HEK293T (cell line): ENCODE measurements at regions of chr5 and their contacts with region 1.

Region 1: GRCh38 chr5:36301858-36302603 is at the start of gene RANBP3L:
- DNase-seq: peak; percentile 44

Region 2: DNA sequence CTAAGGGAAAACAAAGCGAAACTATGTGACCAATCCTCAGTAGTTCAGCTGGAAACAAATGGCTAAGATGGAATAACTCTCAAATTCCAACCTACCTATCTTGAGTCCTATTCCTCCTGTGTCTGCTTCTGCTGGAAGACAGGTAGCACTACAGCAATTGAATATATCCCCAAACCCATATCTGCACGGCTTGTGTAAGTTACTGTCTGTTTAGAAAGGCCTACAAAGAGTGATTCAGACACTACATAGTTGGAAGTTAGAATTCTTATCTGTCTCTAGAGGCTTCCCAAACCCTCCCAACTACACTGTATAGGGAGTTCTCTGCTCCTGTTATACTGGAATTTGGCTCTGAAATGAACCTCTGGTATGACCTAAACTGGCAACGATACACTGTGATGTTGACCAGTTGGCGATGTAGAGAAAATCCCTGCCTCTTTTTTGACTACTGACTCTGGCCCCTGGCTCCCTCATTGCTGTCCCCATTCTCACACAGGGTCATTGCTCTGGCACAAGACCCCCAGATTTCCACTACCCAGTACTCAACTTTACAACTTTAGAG is 37.8 kb before region 1 on chr5:
- CTCF ChIA-PET with region 1: interaction called, 18 read pairs
- POLR2A ChIA-PET with region 1: no interaction called
- DNase-seq: no peak

Region 3: GRCh38 chr5:36494756-36495601 is 192.9 kb after region 1 on chr5:
- CTCF ChIA-PET with region 1: no interaction called
- POLR2A ChIA-PET with region 1: no interaction called
- DNase-seq: no peak